ENCODE measurements at regions of chr1 and their contacts with region 1.

Region 1: GRCh38 chr1:204257954-204258752 is 44.4 kb upstream of the GOLT1A start:
- DNase-seq: no peak
- H3K4me3 ChIP-seq: no peak overlapping the region
- H3K27me3 ChIP-seq: no peaks in the 10 kb centered on the region
- CTCF ChIP-seq: peak; percentile 87

Region 2: DNA sequence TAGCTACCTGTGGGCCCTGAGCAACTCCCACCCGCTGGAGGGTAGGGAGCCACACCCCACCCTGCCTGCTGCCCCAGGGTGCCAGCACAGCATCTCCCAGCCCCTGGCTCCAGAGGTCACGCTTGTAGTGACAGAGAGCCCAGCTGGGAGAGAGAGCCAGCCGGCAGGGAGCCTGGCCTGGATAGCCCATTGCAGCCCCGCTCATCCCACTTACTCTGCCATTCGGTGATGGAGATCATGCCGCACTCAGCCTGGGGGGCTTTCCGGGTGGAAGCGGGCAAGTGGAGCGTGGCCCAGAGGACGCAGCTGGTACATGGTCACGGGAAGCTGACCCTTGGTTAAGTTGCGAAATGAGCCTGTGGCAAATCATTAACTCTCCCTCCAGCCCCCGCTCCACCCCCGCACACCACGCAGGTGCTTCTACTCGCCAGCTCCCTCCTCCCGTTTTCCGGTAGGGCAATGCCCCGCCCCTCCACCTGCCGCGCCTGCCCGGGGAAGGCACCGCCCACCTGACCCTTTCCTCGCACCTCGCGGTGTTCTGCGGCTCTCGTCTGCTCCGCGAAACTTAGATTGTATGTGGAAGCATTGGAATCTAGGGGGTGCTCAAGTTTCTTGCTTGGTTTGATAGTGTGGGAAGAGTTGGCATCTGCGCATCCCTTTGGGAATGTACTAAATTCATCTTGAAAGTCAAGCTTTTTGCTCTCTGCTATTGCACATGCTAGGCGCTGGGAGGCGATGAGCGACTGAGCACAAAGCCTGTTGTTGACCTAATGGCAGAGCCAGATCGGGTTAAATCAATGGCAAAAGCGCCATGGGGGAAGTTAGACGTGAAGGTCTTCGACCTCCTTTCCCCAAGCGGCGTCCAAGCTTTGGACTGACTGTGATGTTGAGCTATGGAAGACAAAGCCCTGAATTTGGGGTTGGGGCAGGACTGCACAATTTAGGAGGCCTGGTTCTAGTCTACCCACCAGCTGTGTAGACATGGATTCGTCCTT is 44.2 kb before region 1 on chr1 and contains the start of gene GOLT1A:
- CTCF ChIA-PET with region 1: interaction called, 32 read pairs
- POLR2A ChIA-PET with region 1: no interaction called
- DNase-seq: peak; percentile 32
- H3K4me3 ChIP-seq: no peak within 1 kb of the TSS
- H3K27me3 ChIP-seq: no peaks in the 10 kb centered on the region
- CTCF ChIP-seq: peak; percentile 87
- polyA plus RNA-seq, gene GOLT1A: 0.21 TPM in 2 replicates

Region 3: DNA sequence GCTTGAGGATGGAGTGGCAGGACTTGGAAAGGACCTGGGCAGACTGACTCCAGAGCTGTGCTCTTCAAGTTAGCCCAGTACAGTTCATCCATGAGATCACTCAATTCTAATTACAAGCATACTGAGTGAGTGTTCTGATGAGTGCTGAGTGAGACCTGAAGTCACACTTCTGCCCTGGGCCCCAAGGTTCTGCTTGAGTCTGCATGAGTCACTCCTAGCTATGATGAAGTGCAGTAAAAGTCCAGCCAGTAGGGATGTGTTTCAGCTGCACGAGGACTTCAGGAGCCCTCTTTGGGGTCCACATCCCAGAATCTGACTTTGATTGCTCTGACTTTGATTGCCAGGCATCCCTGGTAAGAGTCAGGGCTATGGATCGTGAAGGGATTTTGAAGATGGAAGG is 65.7 kb after region 1 on chr1:
- CTCF ChIA-PET with region 1: interaction called, 11 read pairs
- POLR2A ChIA-PET with region 1: no interaction called
- DNase-seq: peak; percentile 22
- H3K4me3 ChIP-seq: no peak overlapping the region
- H3K27me3 ChIP-seq: no peaks in the 10 kb centered on the region
- CTCF ChIP-seq: no peak

Region 4: GRCh38 chr1:204341380-204341779 is 83.2 kb after region 1 on chr1:
- CTCF ChIA-PET with region 1: interaction called, 11 read pairs
- POLR2A ChIA-PET with region 1: no interaction called
- DNase-seq: no peak
- H3K4me3 ChIP-seq: no peak overlapping the region
- H3K27me3 ChIP-seq: no peaks in the 10 kb centered on the region
- CTCF ChIP-seq: no peak

Region 5: GRCh38 chr1:204549313-204549712 is 291.2 kb after region 1 on chr1:
- CTCF ChIA-PET with region 1: no interaction called
- POLR2A ChIA-PET with region 1: no interaction called
- DNase-seq: no peak
- H3K4me3 ChIP-seq: no peak overlapping the region
- H3K27me3 ChIP-seq: no peaks in the 10 kb centered on the region
- CTCF ChIP-seq: no peak

Region 6: GRCh38 chr1:204578867-204579664 is 320.9 kb after region 1 on chr1:
- CTCF ChIA-PET with region 1: no interaction called
- POLR2A ChIA-PET with region 1: no interaction called
- DNase-seq: no peak
- H3K4me3 ChIP-seq: no peak overlapping the region
- H3K27me3 ChIP-seq: no peaks in the 10 kb centered on the region
- CTCF ChIP-seq: no peak

Measured in BJ (cell line).